ENCODE measurements at regions of chr12 and their contacts with region 1.

Region 1: GRCh38 chr12:120292661-120293531 is at the start of gene RNU4-1:
- DNase-seq: peak; percentile 30

Region 2: DNA sequence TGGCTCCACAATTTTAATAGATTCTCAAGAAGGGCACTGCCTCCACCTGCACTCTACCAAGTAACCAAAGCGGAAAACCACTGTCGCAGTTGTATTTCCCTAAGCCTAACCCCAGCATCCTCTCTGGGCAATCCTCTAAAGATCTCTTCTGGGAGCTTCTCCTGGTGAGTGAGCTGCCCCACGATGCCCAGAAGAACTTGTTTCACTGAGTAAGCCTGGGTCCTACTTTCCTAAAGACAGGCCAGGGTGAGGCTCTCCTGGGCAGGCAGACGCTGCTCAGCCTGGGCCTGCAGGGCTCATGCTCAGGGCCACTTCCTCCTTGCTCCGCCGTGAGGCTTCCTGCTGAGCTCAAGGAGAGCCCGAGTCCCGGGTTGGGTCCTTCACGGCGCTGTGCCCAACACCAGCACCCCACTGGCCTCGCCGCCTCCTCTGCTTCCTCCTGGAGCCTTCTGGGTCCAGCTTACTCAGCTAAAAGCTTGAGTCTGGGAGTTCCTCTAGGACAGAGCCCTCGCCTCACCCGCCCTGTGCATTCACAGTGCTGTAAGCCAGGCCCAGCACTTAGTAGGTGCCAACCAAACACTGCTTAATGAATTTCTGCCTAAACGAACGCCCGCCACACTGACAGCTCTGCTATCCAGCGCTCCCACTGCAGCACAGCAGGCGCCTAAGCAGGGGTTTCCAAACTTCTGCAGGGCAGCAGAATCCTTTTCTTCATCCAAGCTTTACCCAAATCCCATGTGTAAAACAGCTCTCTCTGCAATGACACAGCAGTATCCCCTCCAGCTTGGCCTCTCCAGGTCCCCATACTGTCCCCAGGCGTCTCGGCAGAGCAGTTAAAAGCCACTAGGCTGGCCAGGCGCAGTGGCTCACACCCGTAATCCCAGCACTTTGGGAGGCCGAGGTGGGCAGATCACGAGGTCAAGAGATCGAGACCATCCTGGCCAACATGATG is 182.1 kb before region 1 on chr12:
- CTCF ChIA-PET with region 1: no interaction called
- POLR2A ChIA-PET with region 1: no interaction called
- DNase-seq: no peak

Region 3: GRCh38 chr12:120228291-120229070 is 64.4 kb before region 1 on chr12:
- CTCF ChIA-PET with region 1: interaction called, 27 read pairs
- POLR2A ChIA-PET with region 1: interaction called, 269 read pairs
- DNase-seq: peak; percentile 80

Region 4: GRCh38 chr12:120249875-120250795 is 42.8 kb before region 1 on chr12:
- CTCF ChIA-PET with region 1: no interaction called
- POLR2A ChIA-PET with region 1: interaction called, 31 read pairs
- DNase-seq: no peak

Region 5: GRCh38 chr12:120276734-120277133 is 16.2 kb before region 1 on chr12:
- CTCF ChIA-PET with region 1: no interaction called
- POLR2A ChIA-PET with region 1: interaction called, 28 read pairs
- DNase-seq: no peak

Region 6: DNA sequence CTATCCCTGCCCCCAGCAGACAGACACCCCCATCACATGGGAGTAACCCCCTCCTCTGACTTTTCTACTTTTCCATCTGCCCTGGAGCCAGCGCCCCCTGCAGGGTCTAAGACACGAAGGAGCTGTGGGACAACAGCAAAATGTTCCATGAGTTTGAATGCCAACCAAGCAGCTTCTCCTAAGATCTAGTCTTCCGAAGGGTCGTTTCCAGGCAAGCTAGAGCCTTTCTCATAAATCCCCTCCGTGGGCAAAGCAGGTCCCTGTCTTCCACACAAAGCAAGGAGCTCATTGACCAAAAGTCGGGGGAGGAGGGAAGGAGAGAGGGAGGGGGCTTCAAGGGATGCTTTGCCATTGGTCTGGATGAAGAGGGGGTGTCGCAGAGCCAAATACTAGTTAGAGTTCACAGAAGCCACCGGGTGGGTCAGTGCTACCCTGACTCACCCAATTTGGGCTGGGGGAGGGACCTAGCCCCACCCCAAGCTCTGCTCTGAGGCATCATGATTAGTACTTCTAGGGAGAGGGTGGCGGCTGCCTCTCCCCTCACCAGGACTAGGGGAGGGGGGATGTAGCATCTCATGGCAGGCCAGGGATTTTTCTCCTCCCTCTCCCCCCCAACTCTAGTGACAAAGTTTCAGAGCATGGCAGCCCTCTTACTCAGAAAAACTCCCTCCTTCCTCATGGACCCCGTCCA is 74.5 kb after region 1 on chr12:
- CTCF ChIA-PET with region 1: no interaction called
- POLR2A ChIA-PET with region 1: interaction called, 12 read pairs
- DNase-seq: peak; percentile 55

Region 7: DNA sequence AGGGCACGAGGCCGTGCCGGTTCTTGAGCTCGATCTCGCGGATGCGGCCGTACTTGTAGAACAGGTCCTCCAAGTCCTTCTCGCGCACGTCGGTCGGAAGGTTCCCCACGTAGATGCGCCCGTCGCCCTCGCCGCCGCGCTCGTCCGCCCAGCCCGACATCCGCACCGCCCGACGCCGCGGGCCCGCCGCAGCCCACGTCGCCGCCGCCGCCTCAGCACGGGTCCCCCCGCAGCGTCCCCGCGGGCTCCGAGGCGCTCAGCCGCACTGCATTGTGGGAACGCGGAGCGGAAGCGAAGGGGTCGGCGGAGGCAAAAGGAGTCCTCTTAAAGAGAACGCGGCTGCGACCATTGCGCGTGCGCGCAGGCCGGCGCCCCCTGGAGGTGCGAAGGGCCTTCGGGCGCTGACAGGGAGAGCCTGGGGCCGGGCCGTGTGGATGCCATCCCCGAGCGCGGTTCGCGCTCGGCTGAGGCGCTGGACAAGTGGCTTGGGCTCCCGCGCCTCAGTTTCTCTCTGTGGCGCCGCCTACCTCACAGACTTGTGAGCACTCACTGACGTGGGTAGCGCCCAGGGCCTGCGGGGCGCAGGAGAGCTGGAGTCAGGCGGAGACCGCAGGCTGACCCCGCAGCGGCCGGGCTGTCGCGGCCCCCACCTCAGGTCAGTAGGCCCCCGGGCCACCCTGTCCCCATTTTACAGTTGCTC is 176.7 kb after region 1 on chr12 and contains the start of gene SRSF9:
- CTCF ChIA-PET with region 1: interaction called, 3 read pairs
- POLR2A ChIA-PET with region 1: interaction called, 17 read pairs
- DNase-seq: peak; percentile 97

Measured in HEK293T (cell line).